ENCODE measurements at regions of chr9 and their contacts with region 1.

Region 1: GRCh38 chr9:15104826-15105420 is 194.7 kb upstream of the FREM1 start:
- DNase-seq: no peak
- H3K4me3 ChIP-seq: no peak overlapping the region
- H3K27ac ChIP-seq: no peak overlapping the region
- H3K4me1 ChIP-seq: no peaks in the 10 kb centered on the region
- H3K27me3 ChIP-seq: no peaks in the 10 kb centered on the region
- CTCF ChIP-seq: peak; percentile 55 to 74 (median 56)
- EP300 ChIP-seq: no peak
- POLR2A ChIP-seq: no peak

Region 2: GRCh38 chr9:14941501-14942405 is 163.2 kb before region 1 on chr9:
- intact Hi-C with region 1: no loop called
- DNase-seq: no peak
- H3K4me3 ChIP-seq: no peak overlapping the region
- H3K27ac ChIP-seq: no peak overlapping the region
- H3K4me1 ChIP-seq: no peaks in the 10 kb centered on the region
- H3K27me3 ChIP-seq: no peaks in the 10 kb centered on the region
- CTCF ChIP-seq: no peak
- EP300 ChIP-seq: no peak
- POLR2A ChIP-seq: no peak

Region 3: DNA sequence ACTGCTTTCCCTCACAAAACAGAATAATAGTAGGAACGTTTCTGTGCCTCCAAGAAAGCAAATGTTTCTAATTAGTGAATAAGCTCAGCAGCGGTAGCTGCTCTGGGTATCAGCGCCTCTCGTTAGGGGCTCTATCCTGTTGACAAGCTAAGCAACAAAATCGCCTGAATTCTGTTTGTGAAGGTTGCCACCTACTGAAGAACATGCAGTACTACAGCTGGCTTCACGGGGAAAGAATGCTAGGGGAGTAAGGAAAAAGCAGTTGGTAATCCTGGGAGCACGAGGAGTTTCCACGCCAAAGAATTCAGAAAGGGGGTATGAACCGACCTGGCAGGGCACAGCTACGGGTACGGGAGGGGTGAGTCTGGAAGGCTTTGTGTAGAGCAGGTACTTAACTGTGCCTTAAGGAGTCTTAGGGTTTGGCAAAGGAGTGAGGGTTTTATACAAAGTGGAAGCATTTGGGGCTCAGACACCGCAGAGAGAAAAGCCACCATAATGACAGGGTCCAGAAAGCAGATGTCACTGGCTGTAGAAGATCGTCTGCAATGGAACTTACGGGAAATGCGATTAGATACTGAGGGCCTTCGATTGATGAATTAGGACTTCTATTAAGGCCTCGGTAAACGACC is 30.4 kb after region 1 on chr9:
- intact Hi-C with region 1: loop called (anchors 5 kb)
- DNase-seq: no peak
- H3K4me3 ChIP-seq: peak overlapping the region; percentile 18 to 43 (median 26)
- H3K27ac ChIP-seq: no peak overlapping the region
- H3K4me1 ChIP-seq: peaks cover 2 to 12% (median 8%) of the 10 kb centered on the region in 4 donors
- H3K27me3 ChIP-seq: no peaks in the 10 kb centered on the region
- CTCF ChIP-seq: peak; percentile 80 to 98 (median 87)
- EP300 ChIP-seq: no peak
- POLR2A ChIP-seq: no peak

Region 4: DNA sequence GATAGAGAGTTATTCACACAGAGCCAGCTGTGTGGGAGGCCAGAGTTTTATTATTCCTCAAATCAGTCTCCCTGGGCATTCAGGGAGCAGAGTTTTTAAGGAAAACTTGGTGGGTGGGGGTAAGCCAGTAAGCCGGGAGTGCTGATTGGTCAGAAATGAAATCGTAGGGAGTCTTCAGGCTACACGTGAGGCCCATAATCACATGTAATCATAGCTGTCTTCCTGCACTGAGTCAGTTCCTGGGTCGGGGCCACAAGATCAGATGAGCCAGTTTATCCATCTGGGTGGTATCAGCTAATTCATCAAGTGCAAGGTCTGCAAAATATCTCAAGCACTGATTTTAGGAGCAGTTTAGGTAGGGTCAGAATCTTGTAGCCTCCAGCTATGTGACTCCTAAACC is 212.9 kb after region 1 on chr9:
- intact Hi-C with region 1: no loop called
- DNase-seq: no peak
- H3K4me3 ChIP-seq: no peak overlapping the region
- H3K27ac ChIP-seq: no peak overlapping the region
- H3K4me1 ChIP-seq: no peaks in the 10 kb centered on the region
- H3K27me3 ChIP-seq: no peaks in the 10 kb centered on the region
- CTCF ChIP-seq: no peak
- EP300 ChIP-seq: no peak
- POLR2A ChIP-seq: no peak

Region 5: GRCh38 chr9:15578714-15579113 is 473.8 kb after region 1 on chr9:
- intact Hi-C with region 1: no loop called
- DNase-seq: no peak
- H3K4me3 ChIP-seq: no peak overlapping the region
- H3K27ac ChIP-seq: no peak overlapping the region
- H3K4me1 ChIP-seq: no peaks in the 10 kb centered on the region
- H3K27me3 ChIP-seq: no peaks in the 10 kb centered on the region
- CTCF ChIP-seq: no peak
- EP300 ChIP-seq: no peak
- POLR2A ChIP-seq: no peak

Measured in esophagus muscularis mucosa (tissue), 4 donors.